ENCODE measurements at regions of chr17 and their contacts with region 1.

Region 1: DNA sequence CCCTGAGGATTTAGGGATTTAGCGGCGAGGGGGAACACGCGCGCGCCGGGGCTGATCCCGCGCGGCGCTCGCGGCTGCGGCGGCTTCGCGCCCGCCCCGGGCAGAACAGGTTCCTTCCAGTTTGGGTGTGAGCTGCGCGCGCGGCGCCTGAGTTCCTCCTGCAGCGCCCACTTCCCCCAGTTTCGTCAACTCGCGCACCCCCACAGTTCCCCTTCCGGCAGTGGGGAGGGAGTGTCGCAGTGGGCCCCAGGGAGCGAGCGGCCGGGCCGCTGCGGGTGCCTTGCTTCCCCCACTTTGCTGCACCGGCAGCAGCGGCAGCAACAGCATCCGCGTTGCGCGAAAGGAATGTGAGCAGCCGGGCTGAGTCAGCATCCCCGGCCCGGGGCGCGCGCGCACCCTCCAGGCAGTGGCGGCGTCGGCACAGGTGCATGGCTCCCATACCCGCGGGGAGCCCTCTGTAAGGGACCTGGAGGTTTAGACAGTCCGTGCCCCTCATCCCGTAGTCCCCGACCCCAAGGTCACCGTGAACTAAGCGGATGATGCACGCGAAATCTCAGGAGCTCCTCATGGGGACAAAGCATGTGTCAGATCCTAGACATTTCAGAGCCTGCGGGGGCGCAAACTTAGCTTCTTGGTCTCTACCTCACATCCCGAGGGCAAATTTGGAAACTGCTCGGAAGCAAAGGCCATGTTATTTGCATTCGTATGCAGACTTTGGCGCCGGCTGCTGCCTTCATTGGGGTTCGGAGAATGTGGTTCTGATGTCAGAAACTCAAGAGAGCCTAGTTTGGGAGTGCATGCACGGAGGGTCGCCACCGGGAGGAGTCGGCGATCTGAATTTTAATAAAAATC is 775 bp downstream of the ARSG start:
- DNase-seq: peak; percentile 80 to 98 (median 96)
- ATAC-seq: peak; percentile 83
- H3K4me3 ChIP-seq: peak overlapping the region; percentile 92
- H3K4me3 Mint-ChIP-seq: peak overlapping the region; percentile 82 to 100 (median 88)
- H3K27ac ChIP-seq: peak overlapping the region; percentile 95
- H3K27ac Mint-ChIP-seq: peak overlapping the region; percentile 83 to 99 (median 91)
- H3K4me1 ChIP-seq: peaks cover 53% of the 10 kb centered on the region in 2 donors
- H3K4me1 Mint-ChIP-seq: peaks cover 46 to 79% (median 69%) of the 10 kb centered on the region in 7 donors
- H3K27me3 ChIP-seq: no peaks in the 10 kb centered on the region
- H3K27me3 Mint-ChIP-seq: peaks cover 0 to 16% (median 0%) of the 10 kb centered on the region in 5 donors

Region 2: DNA sequence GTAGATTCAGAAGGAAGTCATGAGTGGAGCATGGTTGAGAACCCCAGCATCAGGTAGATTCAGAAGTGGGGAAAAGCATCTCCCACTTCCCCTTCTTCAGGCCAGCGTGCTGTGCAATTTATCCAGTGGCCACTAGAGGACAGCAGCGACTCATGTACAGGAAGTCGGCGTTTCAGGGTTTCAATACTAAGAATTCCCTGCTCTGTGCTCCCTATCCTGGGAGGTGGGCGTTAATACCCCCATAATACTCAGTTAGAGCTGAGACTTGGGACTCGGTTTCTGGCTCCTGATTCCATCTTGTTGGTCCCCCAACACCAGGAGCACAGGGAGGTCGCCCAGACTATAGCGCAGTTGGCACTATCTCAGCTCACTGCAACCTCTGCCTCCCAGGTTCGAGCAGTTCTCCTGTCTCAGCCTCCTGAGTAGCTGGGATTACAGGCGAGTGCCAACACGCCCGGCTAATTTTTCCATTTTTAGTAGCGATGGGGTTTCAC is 119.6 kb before region 1 on chr17:
- CTCF ChIA-PET with region 1: no interaction called
- POLR2A ChIA-PET with region 1: no interaction called
- intact Hi-C with region 1: loop called in 1 of 2 experiments (anchors 2 kb)
- DNase-seq: peak; percentile 45 to 74 (median 67)
- ATAC-seq: peak; percentile 92
- H3K4me3 ChIP-seq: no peak overlapping the region
- H3K4me3 Mint-ChIP-seq: no peak overlapping the region
- H3K27ac ChIP-seq: no peak overlapping the region
- H3K27ac Mint-ChIP-seq: no peak overlapping the region
- H3K4me1 ChIP-seq: peaks cover 0 to 7% of the 10 kb centered on the region in 2 donors
- H3K4me1 Mint-ChIP-seq: peaks cover 14 to 38% (median 20%) of the 10 kb centered on the region in 7 donors
- H3K27me3 ChIP-seq: no peaks in the 10 kb centered on the region
- H3K27me3 Mint-ChIP-seq: peaks cover 0 to 1% (median 0%) of the 10 kb centered on the region in 5 donors

Region 3: DNA sequence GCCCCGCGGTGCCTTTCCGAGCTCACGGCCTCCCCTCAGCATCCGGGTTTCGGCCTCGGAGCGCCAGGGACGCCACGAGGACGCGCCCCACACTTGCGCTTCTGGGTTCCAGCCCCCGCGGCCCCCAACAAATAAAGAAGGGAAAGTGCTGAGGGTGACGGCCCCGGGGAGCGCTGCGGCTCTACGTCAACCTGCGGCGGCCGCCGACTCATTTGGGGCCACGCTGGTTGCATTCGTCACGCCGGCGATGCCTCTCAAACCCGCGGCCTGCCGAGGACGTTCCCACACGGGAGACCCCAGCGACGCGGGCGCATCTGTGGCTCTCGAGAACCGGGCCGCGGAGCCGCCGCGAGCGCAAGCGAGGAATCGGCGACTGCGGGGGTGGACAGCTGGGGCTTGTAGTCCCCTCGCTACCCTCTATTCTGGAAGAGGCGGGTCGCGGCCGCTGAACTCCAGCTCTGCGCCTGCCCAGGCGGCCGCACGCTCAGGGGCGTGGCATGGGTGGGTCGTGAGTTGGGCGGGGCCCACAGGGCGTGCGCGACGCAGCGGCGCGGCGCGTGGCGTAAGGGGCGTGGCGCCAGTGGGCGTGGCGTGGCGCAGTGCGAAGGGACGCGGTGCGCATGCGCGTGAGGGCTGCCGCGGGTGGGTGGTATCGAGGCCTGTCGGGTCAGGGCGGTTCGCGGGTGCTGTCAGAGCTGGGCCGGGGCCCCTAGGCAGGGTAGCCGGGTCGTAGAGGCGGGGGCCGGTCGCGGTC is 44.4 kb before region 1 on chr17 and contains the start of gene AMZ2:
- CTCF ChIA-PET with region 1: no interaction called
- POLR2A ChIA-PET with region 1: interaction called, 46 read pairs
- intact Hi-C with region 1: loop called (anchors 1 kb)
- DNase-seq: peak; percentile 92 to 100 (median 97)
- ATAC-seq: peak; percentile 96
- H3K4me3 ChIP-seq: peak within 1 kb of the TSS; percentile 89
- H3K4me3 Mint-ChIP-seq: peak within 1 kb of the TSS; percentile 80 to 96 (median 92)
- H3K27ac ChIP-seq: peak within 1 kb of the TSS; percentile 99
- H3K27ac Mint-ChIP-seq: peak within 1 kb of the TSS; percentile 78 to 99 (median 97)
- H3K4me1 ChIP-seq: peaks cover 18 to 36% of the 10 kb centered on the region in 2 donors
- H3K4me1 Mint-ChIP-seq: peaks cover 11 to 52% (median 31%) of the 10 kb centered on the region in 7 donors
- H3K27me3 ChIP-seq: no peaks in the 10 kb centered on the region
- H3K27me3 Mint-ChIP-seq: no peaks in the 10 kb centered on the region
- total RNA-seq, gene AMZ2: 47.6 to 85.5 (median 73.8) TPM

Region 4: GRCh38 chr17:68346448-68346847 is 54.4 kb after region 1 on chr17:
- CTCF ChIA-PET with region 1: interaction called, 7 read pairs
- POLR2A ChIA-PET with region 1: interaction called, 61 read pairs
- intact Hi-C with region 1: loop called in 1 of 2 experiments (anchors 1 kb)
- DNase-seq: peak; percentile 26 to 66 (median 50)
- ATAC-seq: peak; percentile 79
- H3K4me3 ChIP-seq: peak overlapping the region; percentile 37
- H3K4me3 Mint-ChIP-seq: peak overlapping the region; percentile 68 to 88 (median 81)
- H3K27ac ChIP-seq: peak overlapping the region; percentile 70
- H3K27ac Mint-ChIP-seq: peak overlapping the region; percentile 91 to 98 (median 96)
- H3K4me1 ChIP-seq: peaks cover 68 to 73% of the 10 kb centered on the region in 2 donors
- H3K4me1 Mint-ChIP-seq: peaks cover 58 to 80% (median 76%) of the 10 kb centered on the region in 7 donors
- H3K27me3 ChIP-seq: no peaks in the 10 kb centered on the region
- H3K27me3 Mint-ChIP-seq: no peaks in the 10 kb centered on the region

Region 5: GRCh38 chr17:68428498-68429170 is 136.6 kb after region 1 on chr17:
- CTCF ChIA-PET with region 1: interaction called, 10 read pairs
- POLR2A ChIA-PET with region 1: interaction called, 26 read pairs
- intact Hi-C with region 1: loop called in 1 of 2 experiments (anchors 1 kb)
- DNase-seq: no peak
- ATAC-seq: no peak
- H3K4me3 ChIP-seq: no peak overlapping the region
- H3K4me3 Mint-ChIP-seq: no peak overlapping the region
- H3K27ac ChIP-seq: no peak overlapping the region
- H3K27ac Mint-ChIP-seq: no peak overlapping the region
- H3K4me1 ChIP-seq: no peaks in the 10 kb centered on the region
- H3K4me1 Mint-ChIP-seq: peaks cover 4 to 12% (median 11%) of the 10 kb centered on the region in 7 donors
- H3K27me3 ChIP-seq: no peaks in the 10 kb centered on the region
- H3K27me3 Mint-ChIP-seq: no peaks in the 10 kb centered on the region

Region 6: GRCh38 chr17:69327060-69327831 is 1035.2 kb after region 1 on chr17 and contains the start of gene ABCA5:
- CTCF ChIA-PET with region 1: no interaction called
- POLR2A ChIA-PET with region 1: no interaction called
- intact Hi-C with region 1: loop called in 1 of 2 experiments (anchors 1 kb)
- DNase-seq: peak; percentile 85 to 91 (median 89)
- ATAC-seq: peak; percentile 97
- H3K4me3 ChIP-seq: peak within 1 kb of the TSS; percentile 85
- H3K4me3 Mint-ChIP-seq: peak within 1 kb of the TSS; percentile 90 to 97 (median 95)
- H3K27ac ChIP-seq: peak within 1 kb of the TSS; percentile 76
- H3K27ac Mint-ChIP-seq: peak within 1 kb of the TSS; percentile 96 to 99 (median 98)
- H3K4me1 ChIP-seq: peaks cover 9 to 10% of the 10 kb centered on the region in 2 donors
- H3K4me1 Mint-ChIP-seq: peaks cover 17 to 39% (median 32%) of the 10 kb centered on the region in 7 donors
- H3K27me3 ChIP-seq: no peaks in the 10 kb centered on the region
- H3K27me3 Mint-ChIP-seq: peaks cover 0 to 10% (median 4%) of the 10 kb centered on the region in 5 donors
- total RNA-seq, gene ABCA5: 29.6 to 49.9 (median 41.3) TPM

Measured in naive thymus-derived CD4-positive, alpha-beta T cell (primary cell).